Heart right ventricle (tissue), 16 donors: ENCODE measurements at regions of chr3 and their contacts with region 1.

Region 1: GRCh38 chr3:98817547-98818041 is 54.5 kb downstream of the ST3GAL6 start:
- DNase-seq: no peak
- ATAC-seq: peak; percentile 55 to 87 (median 76)
- H3K4me3 ChIP-seq: no peak overlapping the region
- H3K27ac ChIP-seq: no peak overlapping the region
- H3K4me1 ChIP-seq: peaks cover 0 to 6% (median 0%) of the 10 kb centered on the region in 9 donors
- H3K27me3 ChIP-seq: no peaks in the 10 kb centered on the region
- CTCF ChIP-seq: peak; percentile 66 to 89 (median 82)

Region 2: DNA sequence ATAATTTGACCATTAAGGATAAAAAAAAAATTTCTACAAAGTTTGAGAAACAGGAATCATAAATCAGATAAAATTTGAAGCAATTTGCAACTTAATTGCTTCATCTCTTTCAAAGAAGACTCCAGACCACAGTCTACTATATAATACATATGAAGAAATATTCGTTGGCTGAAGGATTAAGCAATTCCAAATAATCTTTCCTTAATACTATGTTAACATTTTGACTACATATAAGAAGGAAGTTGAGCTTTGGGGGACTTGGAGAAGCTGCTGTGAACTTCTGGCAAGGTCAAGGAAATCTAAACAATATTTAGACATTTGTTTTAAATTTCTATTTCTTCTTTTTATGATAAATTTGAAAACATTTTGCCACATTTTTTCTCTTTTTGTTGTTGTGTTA is 769.0 kb before region 1 on chr3:
- intact Hi-C with region 1: loop called in 1 of 10 experiments (anchors 5 kb)
- DNase-seq: no peak
- ATAC-seq: no peak
- H3K4me3 ChIP-seq: no peak overlapping the region
- H3K27ac ChIP-seq: no peak overlapping the region
- H3K4me1 ChIP-seq: no peaks in the 10 kb centered on the region
- H3K27me3 ChIP-seq: peaks cover 0 to 10% (median 0%) of the 10 kb centered on the region in 7 donors
- CTCF ChIP-seq: no peak

Region 3: DNA sequence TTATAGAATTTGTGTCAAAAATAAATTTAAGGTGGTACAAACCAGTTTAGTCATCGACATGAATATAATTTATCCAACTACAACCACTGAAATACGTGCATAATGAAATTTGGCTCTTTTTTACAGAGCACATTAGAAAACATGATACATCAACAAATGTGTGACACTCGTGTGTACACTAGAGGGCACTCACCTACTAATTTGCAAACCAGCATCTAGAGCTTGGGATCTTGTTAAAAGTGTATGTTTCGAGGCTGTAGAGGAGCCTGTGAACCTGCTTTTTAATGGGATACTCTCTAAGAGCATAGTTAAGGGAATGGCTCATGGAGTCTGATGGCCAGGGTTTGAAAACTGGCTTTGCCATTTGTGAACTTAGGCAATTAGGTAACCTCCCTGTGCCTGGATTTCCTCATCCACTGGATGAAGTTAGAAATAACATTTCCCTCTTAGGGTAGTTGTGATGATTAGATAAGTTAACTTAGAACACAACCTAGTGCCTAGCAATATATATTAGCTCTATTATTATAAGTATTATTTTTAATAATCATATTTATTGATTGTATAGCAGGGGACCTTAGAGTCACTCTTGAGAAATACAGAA is 215.4 kb before region 1 on chr3:
- intact Hi-C with region 1: loop called in 9 of 10 experiments (anchors 1 to 5 kb)
- DNase-seq: peak in 1 of 2 donors; percentile 50
- ATAC-seq: peak; percentile 61 to 90 (median 86)
- H3K4me3 ChIP-seq: no peak overlapping the region
- H3K27ac ChIP-seq: no peak overlapping the region
- H3K4me1 ChIP-seq: peaks cover 0 to 6% (median 0%) of the 10 kb centered on the region in 9 donors
- H3K27me3 ChIP-seq: no peaks in the 10 kb centered on the region
- CTCF ChIP-seq: peak; percentile 55 to 88 (median 74)

Region 4: DNA sequence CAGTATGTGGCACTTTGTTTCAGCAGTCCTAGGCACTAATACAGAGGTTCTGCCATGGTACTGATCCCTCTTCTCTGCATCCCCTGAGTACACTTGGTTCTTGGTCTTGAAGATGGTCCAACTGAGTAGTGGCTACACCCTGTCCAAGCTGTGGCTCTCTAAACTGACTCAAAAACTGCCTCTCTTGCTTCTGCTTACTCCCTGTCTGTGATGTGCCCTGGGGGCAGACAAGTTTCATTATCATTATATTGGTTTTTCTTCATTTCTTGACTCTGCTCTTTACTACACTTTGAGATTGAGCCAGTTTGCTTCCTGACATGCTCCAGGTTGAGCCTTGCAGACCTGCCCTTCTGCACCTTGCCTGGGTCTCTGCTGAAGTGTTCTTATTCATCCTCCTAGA is 73.3 kb before region 1 on chr3:
- intact Hi-C with region 1: no loop called
- DNase-seq: no peak
- ATAC-seq: peak in 1 of 8 donors; percentile 19
- H3K4me3 ChIP-seq: no peak overlapping the region
- H3K27ac ChIP-seq: peak overlapping the region in 6 of 10 donors; percentile 8 to 83 (median 70)
- H3K4me1 ChIP-seq: peaks cover 0 to 82% (median 25%) of the 10 kb centered on the region in 9 donors
- H3K27me3 ChIP-seq: no peaks in the 10 kb centered on the region
- CTCF ChIP-seq: no peak

Region 5: DNA sequence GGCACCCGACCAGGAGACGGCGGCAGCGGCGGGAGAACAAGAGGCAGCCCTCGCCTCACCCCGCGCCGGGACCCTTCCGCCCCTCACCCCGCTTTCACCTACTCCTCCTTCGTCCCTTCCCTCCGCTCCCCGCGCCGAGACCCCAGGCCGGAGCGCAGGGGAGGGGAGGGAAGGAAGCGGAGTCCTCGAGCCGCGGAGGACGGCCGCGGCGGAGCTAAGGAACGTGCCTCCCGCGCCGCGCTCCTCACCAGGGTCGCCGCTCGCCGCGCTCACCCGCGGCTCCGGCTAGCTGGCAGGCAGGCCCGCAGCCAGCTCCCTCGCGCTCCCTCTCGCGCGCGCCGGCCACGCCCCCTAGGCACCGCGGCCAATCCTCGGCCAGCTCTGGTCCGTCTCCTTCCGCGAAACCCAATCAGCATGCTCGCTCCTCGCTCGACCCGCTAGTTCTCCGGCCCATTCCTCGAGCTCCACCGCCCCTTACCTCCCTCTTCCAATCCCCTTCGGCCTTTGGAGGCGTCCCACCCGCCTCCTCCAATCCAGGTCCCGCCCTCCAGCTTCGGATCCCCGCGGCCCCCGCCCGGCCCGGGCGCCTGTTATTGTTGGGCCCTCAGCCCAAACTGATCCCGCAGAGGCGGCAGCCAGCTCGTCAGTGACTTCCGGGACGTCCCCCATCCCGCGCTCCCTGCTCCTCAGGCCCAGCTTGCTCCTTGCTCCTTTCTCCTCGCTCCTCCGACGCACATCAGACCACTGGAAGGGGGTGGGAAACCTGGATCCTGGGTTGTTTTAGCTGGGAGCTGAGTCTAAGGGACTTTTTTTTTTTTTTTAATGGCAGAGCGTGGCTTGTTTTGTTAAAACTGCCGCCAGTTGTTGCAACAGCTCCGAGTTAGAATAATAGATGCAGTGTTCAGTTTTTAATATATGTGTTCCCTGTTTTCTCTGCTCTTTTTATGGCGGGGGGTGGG is 84.1 kb after region 1 on chr3 and contains the start of gene DCBLD2:
- intact Hi-C with region 1: loop called in 2 of 10 experiments (anchors 5 to 10 kb)
- DNase-seq: peak; percentile 97 to 99
- ATAC-seq: peak; percentile 98 to 99 (median 99)
- H3K4me3 ChIP-seq: peak within 1 kb of the TSS; percentile 71 to 98 (median 90)
- H3K27ac ChIP-seq: peak within 1 kb of the TSS; percentile 82 to 96 (median 94)
- H3K4me1 ChIP-seq: peaks cover 0 to 47% (median 22%) of the 10 kb centered on the region in 9 donors
- H3K27me3 ChIP-seq: peaks cover 0 to 9% (median 0%) of the 10 kb centered on the region in 7 donors
- CTCF ChIP-seq: no peak
- total RNA-seq, gene DCBLD2: 24.6 to 97.4 (median 48.4) TPM

Region 6: DNA sequence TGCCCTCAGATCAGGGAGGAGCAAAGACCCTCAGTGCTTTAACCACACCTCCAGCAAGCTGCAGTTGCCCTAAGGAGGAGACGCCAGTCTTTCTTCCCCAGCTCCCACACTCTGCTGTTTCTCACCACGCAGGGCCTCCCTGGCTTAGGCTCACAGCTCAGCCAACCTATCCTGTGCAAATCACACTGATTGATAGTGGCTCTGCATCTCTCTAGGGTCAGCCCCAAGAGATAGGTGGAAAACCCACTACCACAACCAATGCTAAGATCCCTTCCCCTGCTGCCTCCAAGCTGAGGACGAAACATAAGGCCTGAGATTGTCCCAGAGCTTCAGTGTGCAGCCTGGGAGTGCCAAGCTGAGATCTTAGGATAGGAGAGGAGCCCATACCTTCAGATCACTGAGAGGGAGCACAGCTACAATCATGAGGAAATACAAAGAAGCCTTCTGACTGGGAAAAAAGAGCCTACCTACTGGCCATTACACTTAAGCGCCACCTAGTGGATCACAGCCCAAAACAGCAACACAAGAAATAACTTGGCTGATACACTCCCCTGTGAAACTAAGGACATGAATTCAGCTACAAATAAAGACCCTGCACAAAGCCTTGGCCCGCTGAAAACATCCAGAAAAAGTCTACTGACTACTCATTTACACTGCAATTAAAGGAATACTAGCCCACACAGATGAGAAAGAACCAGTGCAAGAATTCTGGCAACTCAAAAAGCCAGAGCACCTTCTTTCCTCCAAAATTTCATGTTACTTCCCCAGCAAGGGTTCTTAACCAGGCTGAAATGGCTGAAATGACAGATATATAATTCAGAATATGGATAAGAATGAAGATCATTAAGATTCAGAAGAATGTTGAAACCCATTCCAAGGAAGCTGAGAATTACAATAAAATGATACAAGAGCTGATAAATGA is 355.4 kb after region 1 on chr3:
- intact Hi-C with region 1: loop called in 2 of 10 experiments (anchors 10 kb)
- DNase-seq: peak in 1 of 2 donors; percentile 23
- ATAC-seq: peak in 4 of 8 donors; percentile 25 to 58 (median 40)
- H3K4me3 ChIP-seq: no peak overlapping the region
- H3K27ac ChIP-seq: no peak overlapping the region
- H3K4me1 ChIP-seq: no peaks in the 10 kb centered on the region
- H3K27me3 ChIP-seq: no peaks in the 10 kb centered on the region
- CTCF ChIP-seq: peak; percentile 12 to 71 (median 62)